PC-3 (cell line): ENCODE measurements at regions of chr5 and their contacts with region 1.

Region 1: DNA sequence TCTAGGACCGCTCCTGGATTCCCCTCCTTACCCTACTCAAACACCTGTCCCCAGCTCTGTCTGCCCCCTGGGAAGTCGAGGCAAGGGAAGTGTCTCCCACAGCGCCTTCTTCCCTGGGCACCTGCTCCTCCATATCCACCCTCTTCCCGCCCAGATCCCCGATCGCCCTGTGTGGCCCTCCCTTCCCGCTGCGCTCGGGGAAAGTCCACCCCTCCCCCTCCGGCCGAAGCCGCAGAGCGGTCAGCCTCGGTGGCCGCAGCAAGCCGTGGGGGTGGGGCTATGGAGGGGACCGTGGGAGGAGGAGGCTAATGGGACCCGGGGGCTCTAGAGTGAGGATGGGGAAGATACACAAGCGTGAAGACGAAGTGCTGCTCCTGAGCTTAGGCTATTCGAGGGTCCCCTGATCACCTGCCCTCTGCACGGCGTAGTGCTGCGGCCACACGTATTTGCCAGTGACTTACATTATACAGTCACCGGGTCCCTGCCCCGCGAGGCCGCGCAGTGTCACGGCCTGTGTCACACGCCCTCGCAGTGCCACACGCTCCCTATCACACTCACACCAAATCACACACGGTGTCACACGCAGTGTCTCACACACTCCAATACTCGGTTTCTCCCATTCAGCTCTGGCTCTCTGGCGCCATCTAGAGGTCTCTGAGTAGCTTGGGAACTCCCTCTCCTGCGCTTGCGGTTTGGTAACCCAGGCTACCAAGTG is 658 bp upstream of the PCDH1 start:
- DNase-seq: peak; percentile 93
- ATAC-seq: peak; percentile 63
- H3K4me3 ChIP-seq: peak overlapping the region; percentile 71
- H3K27ac ChIP-seq: 0 out of 2 replicates have a peak overlapping the region, but pooled peaks have one; percentile 20
- H3K4me1 ChIP-seq: peaks cover 9% of the 10 kb centered on the region; the same call in 1 of the 2 replicates
- H3K27me3 ChIP-seq: no peaks in the 10 kb centered on the region
- CTCF ChIP-seq: peak; percentile 85

Region 2: GRCh38 chr5:141691867-141692532 is 186.9 kb before region 1 on chr5:
- CTCF ChIA-PET with region 1: interaction called, 10 read pairs
- POLR2A ChIA-PET with region 1: no interaction called
- intact Hi-C with region 1: loop called (anchors 2 kb)
- DNase-seq: peak; percentile 85
- ATAC-seq: peak; percentile 86
- H3K4me3 ChIP-seq: peak overlapping the region; percentile 57
- H3K27ac ChIP-seq: no peak overlapping the region
- H3K4me1 ChIP-seq: peaks cover 16% of the 10 kb centered on the region
- H3K27me3 ChIP-seq: no peaks in the 10 kb centered on the region
- CTCF ChIP-seq: peak; percentile 80

Region 3: GRCh38 chr5:141701360-141702119 is 177.3 kb before region 1 on chr5:
- CTCF ChIA-PET with region 1: interaction called, 3 read pairs
- POLR2A ChIA-PET with region 1: no interaction called
- intact Hi-C with region 1: loop called (anchors 1 kb)
- DNase-seq: no peak
- ATAC-seq: no peak
- H3K4me3 ChIP-seq: peak overlapping the region; percentile 81; the same call in 1 of the 2 replicates
- H3K27ac ChIP-seq: no peak overlapping the region
- H3K4me1 ChIP-seq: peaks cover 18% of the 10 kb centered on the region
- H3K27me3 ChIP-seq: no peaks in the 10 kb centered on the region
- CTCF ChIP-seq: no peak

Region 4: GRCh38 chr5:141763541-141763940 is 115.3 kb before region 1 on chr5:
- CTCF ChIA-PET with region 1: no interaction called
- POLR2A ChIA-PET with region 1: no interaction called
- intact Hi-C with region 1: no loop called
- DNase-seq: no peak
- ATAC-seq: no peak
- H3K4me3 ChIP-seq: no peak overlapping the region
- H3K27ac ChIP-seq: no peak overlapping the region
- H3K4me1 ChIP-seq: no peaks in the 10 kb centered on the region
- H3K27me3 ChIP-seq: no peaks in the 10 kb centered on the region
- CTCF ChIP-seq: no peak

Region 5: GRCh38 chr5:141811287-141812155 is 67.3 kb before region 1 on chr5:
- CTCF ChIA-PET with region 1: no interaction called
- POLR2A ChIA-PET with region 1: no interaction called
- intact Hi-C with region 1: loop called (anchors 10 kb)
- DNase-seq: no peak
- ATAC-seq: no peak
- H3K4me3 ChIP-seq: no peak overlapping the region
- H3K27ac ChIP-seq: no peak overlapping the region
- H3K4me1 ChIP-seq: no peaks in the 10 kb centered on the region
- H3K27me3 ChIP-seq: no peaks in the 10 kb centered on the region
- CTCF ChIP-seq: peak; percentile 60

Region 6: GRCh38 chr5:141821361-141821925 is 57.4 kb before region 1 on chr5:
- CTCF ChIA-PET with region 1: no interaction called
- POLR2A ChIA-PET with region 1: interaction called, 13 read pairs
- intact Hi-C with region 1: loop called (anchors 10 kb)
- DNase-seq: peak; percentile 57
- ATAC-seq: 0 out of 2 replicates have a peak, but pooled peaks have one; percentile 24
- H3K4me3 ChIP-seq: no peak overlapping the region
- H3K27ac ChIP-seq: no peak overlapping the region
- H3K4me1 ChIP-seq: no peaks in the 10 kb centered on the region
- H3K27me3 ChIP-seq: no peaks in the 10 kb centered on the region
- CTCF ChIP-seq: no peak

Region 7: DNA sequence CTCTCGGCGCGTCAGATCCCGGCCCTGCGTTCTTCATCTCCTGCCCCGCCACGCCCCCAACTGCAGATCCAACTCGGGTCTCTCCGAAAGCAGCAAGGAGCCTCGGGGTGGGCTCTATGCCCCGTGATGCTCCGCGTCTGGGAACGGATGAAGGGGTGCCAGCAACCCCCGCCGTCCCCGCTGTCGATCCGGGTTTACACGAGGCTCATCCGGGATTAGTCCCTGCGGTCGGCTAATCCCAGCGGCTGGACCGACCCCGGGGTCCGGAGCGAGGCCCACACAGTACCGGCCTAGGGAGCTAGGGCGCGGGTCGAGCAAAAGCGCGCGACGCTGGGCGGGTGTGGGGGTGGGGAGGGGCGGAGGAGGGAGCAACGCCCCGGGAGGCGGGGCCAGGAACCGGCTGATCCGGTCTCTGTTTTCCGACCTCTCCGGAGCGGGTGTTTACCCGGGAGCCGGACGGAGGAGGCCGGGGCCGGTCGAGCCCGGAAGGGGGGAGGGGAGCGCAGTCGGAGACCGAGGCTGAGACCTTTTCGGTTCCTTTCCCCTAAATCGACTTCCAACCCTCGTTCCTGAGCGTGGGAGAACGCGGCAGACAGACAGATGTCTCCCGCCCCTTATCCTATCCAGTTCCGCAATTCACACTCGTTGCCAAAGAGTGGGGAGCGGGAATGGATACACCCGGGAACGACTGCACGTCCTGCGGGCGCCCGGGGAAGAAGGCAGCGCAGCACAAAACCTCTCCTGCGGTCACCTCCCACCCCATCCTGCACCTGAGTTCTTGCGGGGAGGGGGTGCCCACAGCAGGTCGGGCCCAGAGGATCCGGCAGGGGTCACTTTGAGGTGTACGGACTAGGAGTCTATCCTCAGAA is 29.3 kb before region 1 on chr5:
- CTCF ChIA-PET with region 1: interaction called, 11 read pairs
- POLR2A ChIA-PET with region 1: interaction called, 8 read pairs
- intact Hi-C with region 1: loop called (anchors 1 kb)
- DNase-seq: peak; percentile 87
- ATAC-seq: peak; percentile 72
- H3K4me3 ChIP-seq: peak overlapping the region; percentile 72
- H3K27ac ChIP-seq: peak overlapping the region; percentile 100
- H3K4me1 ChIP-seq: peaks cover 21% of the 10 kb centered on the region
- H3K27me3 ChIP-seq: no peaks in the 10 kb centered on the region
- CTCF ChIP-seq: no peak